CD4-positive, alpha-beta T cell (primary cell): ENCODE measurements at regions of chr14 and their contacts with region 1.

Region 1: DNA sequence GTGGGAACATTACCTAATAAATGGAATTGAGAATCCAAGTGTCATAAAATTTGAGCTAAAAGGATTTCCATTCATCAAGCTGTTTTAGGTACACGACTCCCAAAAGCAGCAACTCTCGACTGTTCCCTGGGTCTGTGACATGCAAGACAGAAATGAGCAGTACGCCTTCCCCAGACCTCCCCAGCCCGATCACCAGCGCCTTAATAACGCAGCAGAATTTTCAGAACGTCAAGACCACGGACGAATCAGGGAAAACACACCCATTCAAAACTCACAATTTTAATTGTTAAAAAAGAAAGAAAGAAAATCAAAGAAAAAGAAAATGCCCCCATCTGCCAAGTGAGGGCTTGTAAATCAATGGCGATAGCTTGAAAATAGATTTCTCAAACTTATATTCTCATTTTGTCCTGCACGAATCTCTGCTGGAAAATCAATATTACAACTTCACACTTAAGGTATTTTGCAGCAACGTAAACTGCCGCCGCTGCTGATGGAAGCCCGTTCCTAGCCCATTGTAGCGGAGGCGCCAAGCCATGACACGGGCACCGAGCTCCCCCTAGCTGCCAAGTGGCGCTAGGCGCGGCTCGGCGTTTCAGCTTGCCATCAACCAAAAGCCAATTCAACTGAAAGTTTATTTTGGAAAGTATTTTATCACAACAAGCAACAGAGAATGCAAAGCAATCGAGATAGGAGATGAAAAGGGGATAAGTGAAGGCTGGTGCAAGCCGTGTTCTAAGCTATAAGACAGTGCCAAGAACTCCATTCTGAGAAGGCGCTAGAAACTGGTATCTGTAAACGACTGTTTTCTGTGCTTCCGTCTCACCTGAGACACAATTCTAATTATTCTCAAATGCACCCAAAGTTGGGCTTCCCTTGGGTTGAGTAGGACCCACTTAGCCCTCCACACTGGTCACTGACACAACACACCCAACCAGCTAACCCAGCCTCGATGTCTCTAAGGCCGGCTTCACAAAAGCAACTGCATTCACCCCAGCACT is 5.5 kb downstream of the BCL11B start:
- DNase-seq: peak; percentile 83 to 94 (median 90)
- ATAC-seq: peak; percentile 22
- H3K4me3 ChIP-seq: peak overlapping the region; percentile 97
- H3K4me3 Mint-ChIP-seq: peak overlapping the region; percentile 100
- H3K27ac ChIP-seq: peak overlapping the region; percentile 95 to 97
- H3K27ac Mint-ChIP-seq: peak overlapping the region; percentile 99
- H3K4me1 ChIP-seq: peaks cover 53% of the 10 kb centered on the region
- H3K4me1 Mint-ChIP-seq: peaks cover 63% of the 10 kb centered on the region
- H3K27me3 ChIP-seq: no peaks in the 10 kb centered on the region
- H3K27me3 Mint-ChIP-seq: peaks cover 5% of the 10 kb centered on the region
- CTCF ChIP-seq: peak; percentile 99

Region 2: DNA sequence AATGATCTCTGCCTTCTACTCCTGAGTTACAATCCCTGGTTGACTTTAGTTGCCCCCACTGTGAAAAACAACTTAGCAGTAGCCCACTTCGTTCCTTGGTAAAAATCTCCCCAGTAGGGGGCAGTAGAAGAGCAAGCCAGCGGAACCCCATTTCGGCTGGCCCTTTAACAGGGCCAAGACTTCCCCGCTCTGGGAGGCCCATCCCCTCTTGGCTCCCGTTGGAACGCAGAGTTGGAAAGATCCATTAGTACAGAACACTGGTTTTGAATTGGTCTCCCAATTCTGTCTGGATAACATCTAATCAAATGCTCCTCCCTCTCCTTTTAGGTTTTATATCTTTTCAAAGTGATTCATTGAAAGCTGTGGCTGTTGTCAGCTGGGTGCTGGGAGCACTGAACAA is 1127.8 kb before region 1 on chr14:
- CTCF ChIA-PET with region 1: interaction called, 17 read pairs
- POLR2A ChIA-PET with region 1: interaction called, 253 read pairs
- intact Hi-C with region 1: loop called in 1 of 2 experiments (anchors 2 kb)
- DNase-seq: peak; percentile 48 to 88 (median 64)
- ATAC-seq: peak; percentile 47
- H3K4me3 ChIP-seq: peak overlapping the region; percentile 41
- H3K4me3 Mint-ChIP-seq: peak overlapping the region; percentile 80
- H3K27ac ChIP-seq: peak overlapping the region; percentile 56 to 71
- H3K27ac Mint-ChIP-seq: peak overlapping the region; percentile 92
- H3K4me1 ChIP-seq: peaks cover 65% of the 10 kb centered on the region
- H3K4me1 Mint-ChIP-seq: peaks cover 99% of the 10 kb centered on the region
- H3K27me3 ChIP-seq: no peaks in the 10 kb centered on the region
- H3K27me3 Mint-ChIP-seq: no peaks in the 10 kb centered on the region
- CTCF ChIP-seq: peak; percentile 94

Region 3: GRCh38 chr14:98203421-98203820 is 1063.1 kb before region 1 on chr14:
- CTCF ChIA-PET with region 1: interaction called, 4 read pairs
- POLR2A ChIA-PET with region 1: interaction called, 17 read pairs
- intact Hi-C with region 1: loop called in 1 of 2 experiments (anchors 5 kb)
- DNase-seq: peak in 3 of 14 experiments; percentile 25 to 53 (median 45)
- ATAC-seq: peak; percentile 62
- H3K4me3 ChIP-seq: peak overlapping the region; percentile 44
- H3K4me3 Mint-ChIP-seq: peak overlapping the region; percentile 82
- H3K27ac ChIP-seq: peak overlapping the region in 1 of 2 donors; percentile 18
- H3K27ac Mint-ChIP-seq: peak overlapping the region; percentile 93
- H3K4me1 ChIP-seq: peaks cover 63% of the 10 kb centered on the region
- H3K4me1 Mint-ChIP-seq: peaks cover 99% of the 10 kb centered on the region
- H3K27me3 ChIP-seq: no peaks in the 10 kb centered on the region
- H3K27me3 Mint-ChIP-seq: no peaks in the 10 kb centered on the region
- CTCF ChIP-seq: no peak

Region 4: DNA sequence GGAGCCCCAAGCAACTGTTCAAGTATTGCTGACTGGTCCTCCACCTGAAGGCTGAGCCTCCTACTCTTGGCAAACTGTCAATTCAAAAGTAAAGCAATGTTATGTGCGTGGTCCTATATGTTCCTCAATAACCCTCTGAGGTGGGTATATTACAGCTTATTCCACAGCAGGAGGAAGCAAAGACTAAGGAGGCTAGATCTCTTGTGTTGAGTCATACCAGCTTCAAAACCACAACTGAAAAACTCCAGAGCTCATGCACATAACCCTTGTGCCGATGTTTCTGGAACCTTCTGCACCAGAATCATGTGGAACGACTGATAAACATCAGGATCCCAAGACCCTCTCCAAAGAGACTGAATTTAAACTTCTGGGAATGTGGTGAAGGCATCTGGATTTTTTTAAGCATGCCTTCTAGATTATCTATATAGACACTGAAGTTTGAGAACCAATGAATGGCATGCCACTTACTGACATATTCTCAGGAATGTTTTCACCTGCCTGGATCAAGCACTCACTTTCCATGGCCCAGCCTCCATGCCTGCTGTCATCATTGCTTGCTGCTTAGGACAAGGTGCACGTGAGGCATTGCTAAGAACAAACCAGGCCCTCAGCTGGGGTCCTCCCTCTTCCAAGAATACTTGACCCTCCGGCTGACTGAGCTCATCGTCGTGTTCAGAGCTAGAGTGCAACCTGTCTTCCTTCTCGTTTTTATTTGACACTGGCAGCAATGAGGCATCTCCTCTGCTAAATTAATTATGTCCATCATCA is 189.2 kb before region 1 on chr14:
- CTCF ChIA-PET with region 1: no interaction called
- POLR2A ChIA-PET with region 1: no interaction called
- intact Hi-C with region 1: no loop called
- DNase-seq: peak in 1 of 14 experiments; percentile 19
- ATAC-seq: no peak
- H3K4me3 ChIP-seq: no peak overlapping the region
- H3K4me3 Mint-ChIP-seq: no peak overlapping the region
- H3K27ac ChIP-seq: no peak overlapping the region
- H3K27ac Mint-ChIP-seq: no peak overlapping the region
- H3K4me1 ChIP-seq: peaks cover 5% of the 10 kb centered on the region
- H3K4me1 Mint-ChIP-seq: peaks cover 16% of the 10 kb centered on the region
- H3K27me3 ChIP-seq: no peaks in the 10 kb centered on the region
- H3K27me3 Mint-ChIP-seq: no peaks in the 10 kb centered on the region
- CTCF ChIP-seq: no peak

Region 5: DNA sequence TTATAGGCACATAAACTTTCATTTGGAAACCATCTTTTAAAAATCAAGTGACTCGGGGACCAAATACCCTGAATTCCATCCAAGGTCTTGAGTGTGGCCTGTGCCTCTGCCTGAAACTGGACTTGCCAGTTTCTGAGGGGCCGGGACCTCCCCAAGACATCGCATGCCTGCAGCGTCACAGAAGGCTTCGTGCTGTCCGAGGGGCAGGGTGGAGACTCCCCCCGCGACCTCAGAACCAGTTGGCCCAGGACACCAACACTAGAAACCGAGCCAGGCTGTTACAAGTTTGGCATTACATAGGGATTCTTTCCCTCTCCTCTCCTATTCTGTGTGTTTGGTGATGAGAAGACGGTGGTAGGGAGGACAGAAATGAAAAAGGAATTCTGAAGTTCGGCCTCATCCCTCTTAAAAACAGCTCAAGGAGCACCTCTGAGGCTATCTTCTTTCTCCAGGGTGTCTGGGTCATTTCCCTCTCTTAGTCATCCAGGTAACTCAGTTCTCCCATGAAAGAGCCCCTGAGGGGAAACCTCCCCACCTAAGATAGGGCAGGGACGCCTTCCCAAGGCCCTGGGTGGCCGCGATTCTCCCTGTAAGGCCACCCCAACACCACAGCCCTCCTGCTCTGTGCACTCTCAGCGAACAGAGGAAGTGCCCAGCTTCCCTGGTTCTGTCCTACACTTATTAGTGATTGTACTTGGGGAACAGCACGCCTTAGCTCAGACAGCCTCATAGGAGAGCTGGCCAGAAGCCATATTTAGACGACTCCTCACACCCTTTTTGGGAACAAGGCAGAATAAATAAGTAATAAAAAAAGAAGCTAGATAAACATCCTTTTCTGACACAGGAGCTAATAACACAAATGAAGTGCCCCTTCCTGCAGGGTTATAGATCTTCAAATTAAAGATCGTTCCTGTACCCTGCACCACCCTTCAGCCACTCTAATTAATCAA is 88.3 kb before region 1 on chr14:
- CTCF ChIA-PET with region 1: interaction called, 15 read pairs
- POLR2A ChIA-PET with region 1: interaction called, 4,389 read pairs
- intact Hi-C with region 1: no loop called
- DNase-seq: peak in 2 of 14 experiments; percentile 0 to 9
- ATAC-seq: no peak
- H3K4me3 ChIP-seq: no peak overlapping the region
- H3K4me3 Mint-ChIP-seq: peak overlapping the region; percentile 39
- H3K27ac ChIP-seq: peak overlapping the region; percentile 37 to 80
- H3K27ac Mint-ChIP-seq: peak overlapping the region; percentile 95
- H3K4me1 ChIP-seq: peaks cover 56% of the 10 kb centered on the region
- H3K4me1 Mint-ChIP-seq: peaks cover 75% of the 10 kb centered on the region
- H3K27me3 ChIP-seq: no peaks in the 10 kb centered on the region
- H3K27me3 Mint-ChIP-seq: no peaks in the 10 kb centered on the region
- CTCF ChIP-seq: no peak

Region 6: DNA sequence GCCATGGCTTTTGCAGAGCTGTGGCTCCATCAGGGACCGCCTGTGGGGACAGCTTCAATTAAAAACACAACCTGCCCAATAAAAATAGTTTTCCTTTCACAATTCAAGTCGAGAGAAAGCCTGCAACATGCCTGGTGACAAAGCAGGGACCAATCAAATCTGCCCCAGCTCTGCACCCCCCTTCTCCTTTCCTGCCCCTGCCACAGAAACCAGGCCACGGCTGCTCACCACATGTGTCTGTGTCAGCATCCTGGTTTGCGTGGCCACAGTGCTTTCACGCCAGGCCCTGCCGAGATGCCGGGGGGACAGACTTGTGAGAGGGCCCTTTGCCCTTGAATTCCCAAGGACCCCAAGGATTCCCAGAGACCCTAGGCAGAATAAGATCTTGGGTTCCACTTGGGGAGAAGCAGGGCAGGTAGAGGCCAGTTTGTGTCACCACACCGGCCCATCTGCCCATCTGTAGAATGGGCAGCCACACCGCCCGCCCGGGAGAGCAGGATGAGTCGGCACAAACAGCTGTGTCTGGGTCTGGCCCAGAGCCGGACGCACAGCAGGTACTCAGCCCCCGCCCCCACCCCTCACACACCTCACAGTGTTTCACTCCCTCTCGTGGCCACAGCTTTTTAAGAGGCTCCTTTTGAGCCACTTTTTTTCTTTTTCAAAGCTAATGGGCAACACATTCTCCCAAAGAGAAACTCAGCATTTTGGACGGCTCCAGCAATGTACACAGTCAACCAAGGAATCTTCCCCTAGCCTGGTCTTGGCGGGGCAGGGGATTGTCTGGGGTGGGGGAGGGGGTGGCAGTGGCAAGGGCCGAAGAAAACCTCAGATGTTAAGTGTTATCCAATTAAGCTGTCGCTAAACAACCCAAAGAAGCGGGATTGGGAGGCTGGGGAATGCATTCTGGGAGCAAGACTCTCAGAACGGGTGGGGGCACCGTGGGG is 36.0 kb before region 1 on chr14:
- CTCF ChIA-PET with region 1: interaction called, 179 read pairs
- POLR2A ChIA-PET with region 1: interaction called, 4,389 read pairs
- intact Hi-C with region 1: loop called (anchors 2 to 5 kb)
- DNase-seq: peak; percentile 62 to 95 (median 80)
- ATAC-seq: peak; percentile 60
- H3K4me3 ChIP-seq: peak overlapping the region; percentile 28
- H3K4me3 Mint-ChIP-seq: peak overlapping the region; percentile 90
- H3K27ac ChIP-seq: peak overlapping the region; percentile 95 to 97
- H3K27ac Mint-ChIP-seq: peak overlapping the region; percentile 95
- H3K4me1 ChIP-seq: peaks cover 100% of the 10 kb centered on the region
- H3K4me1 Mint-ChIP-seq: peaks cover 96% of the 10 kb centered on the region
- H3K27me3 ChIP-seq: no peaks in the 10 kb centered on the region
- H3K27me3 Mint-ChIP-seq: no peaks in the 10 kb centered on the region
- CTCF ChIP-seq: peak; percentile 46

Region 7: DNA sequence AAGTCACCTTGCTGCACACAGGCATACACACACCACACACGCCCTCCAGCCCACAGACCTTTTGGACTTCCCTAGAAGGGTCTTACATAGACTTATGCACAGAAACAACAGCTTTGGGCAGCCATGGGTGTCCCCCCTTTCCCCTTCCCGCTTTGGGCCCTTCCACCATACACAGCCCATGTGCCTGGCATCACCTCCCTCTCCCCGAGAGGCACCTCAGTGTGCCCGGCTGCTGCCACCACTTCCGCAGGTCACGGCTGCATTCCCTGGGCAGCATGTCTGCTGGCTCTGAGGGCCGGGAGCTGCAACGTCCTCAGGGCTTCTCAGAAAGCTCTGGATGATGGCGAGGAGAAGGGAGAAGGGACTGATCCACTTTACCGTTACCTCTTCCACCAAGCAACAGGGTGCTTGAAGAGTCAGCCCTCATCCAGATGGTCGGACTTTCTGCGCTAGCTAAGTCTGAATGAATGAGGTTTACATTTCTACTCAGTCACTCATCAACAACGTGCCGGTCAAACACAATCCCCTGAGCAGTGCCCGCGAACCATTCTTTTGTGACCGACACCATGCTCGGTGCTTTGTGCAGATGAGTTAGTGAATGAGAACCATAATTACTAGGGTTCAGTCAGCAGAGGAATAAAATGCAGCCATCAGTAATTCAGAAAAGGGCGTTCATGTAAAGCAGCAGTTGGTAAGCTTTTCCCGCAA is 77.7 kb after region 1 on chr14:
- CTCF ChIA-PET with region 1: no interaction called
- POLR2A ChIA-PET with region 1: no interaction called
- intact Hi-C with region 1: no loop called
- DNase-seq: no peak
- ATAC-seq: no peak
- H3K4me3 ChIP-seq: no peak overlapping the region
- H3K4me3 Mint-ChIP-seq: no peak overlapping the region
- H3K27ac ChIP-seq: no peak overlapping the region
- H3K27ac Mint-ChIP-seq: no peak overlapping the region
- H3K4me1 ChIP-seq: no peaks in the 10 kb centered on the region
- H3K4me1 Mint-ChIP-seq: no peaks in the 10 kb centered on the region
- H3K27me3 ChIP-seq: peaks cover 0 to 15% of the 10 kb centered on the region in 2 experiments
- H3K27me3 Mint-ChIP-seq: peaks cover 24% of the 10 kb centered on the region
- CTCF ChIP-seq: no peak

Region 8: GRCh38 chr14:99537399-99537798 is 270.9 kb after region 1 on chr14:
- CTCF ChIA-PET with region 1: no interaction called
- POLR2A ChIA-PET with region 1: no interaction called
- intact Hi-C with region 1: no loop called
- DNase-seq: no peak
- ATAC-seq: no peak
- H3K4me3 ChIP-seq: no peak overlapping the region
- H3K4me3 Mint-ChIP-seq: no peak overlapping the region
- H3K27ac ChIP-seq: no peak overlapping the region
- H3K27ac Mint-ChIP-seq: no peak overlapping the region
- H3K4me1 ChIP-seq: peaks cover 5% of the 10 kb centered on the region
- H3K4me1 Mint-ChIP-seq: peaks cover 5% of the 10 kb centered on the region
- H3K27me3 ChIP-seq: no peaks in the 10 kb centered on the region
- H3K27me3 Mint-ChIP-seq: no peaks in the 10 kb centered on the region
- CTCF ChIP-seq: no peak